Ascending aorta (tissue), 2 donors: ENCODE measurements at regions of chr16 and their contacts with region 1.

Region 1: GRCh38 chr16:11742539-11743307 is at the start of gene TXNDC11:
- DNase-seq: peak; percentile 95 to 99
- H3K4me3 ChIP-seq: peak within 1 kb of the TSS; percentile 74 to 80
- H3K27ac ChIP-seq: peak within 1 kb of the TSS; percentile 93 to 98
- H3K4me1 ChIP-seq: peaks cover 0 to 13% of the 10 kb centered on the region in 2 donors
- H3K27me3 ChIP-seq: no peaks in the 10 kb centered on the region
- CTCF ChIP-seq: no peak
- total RNA-seq, gene TXNDC11: 86.5 TPM

Region 2: GRCh38 chr16:10944249-10945064 is 798.3 kb before region 1 on chr16 and contains the start of gene CLEC16A:
- intact Hi-C with region 1: loop called (anchors 10 kb)
- DNase-seq: peak; percentile 93 to 99
- H3K4me3 ChIP-seq: peak within 1 kb of the TSS; percentile 98
- H3K27ac ChIP-seq: peak within 1 kb of the TSS; percentile 85 to 86
- H3K4me1 ChIP-seq: peaks cover 20 to 49% of the 10 kb centered on the region in 2 donors
- H3K27me3 ChIP-seq: no peaks in the 10 kb centered on the region
- CTCF ChIP-seq: no peak
- total RNA-seq, gene CLEC16A: 16.2 TPM

Region 3: DNA sequence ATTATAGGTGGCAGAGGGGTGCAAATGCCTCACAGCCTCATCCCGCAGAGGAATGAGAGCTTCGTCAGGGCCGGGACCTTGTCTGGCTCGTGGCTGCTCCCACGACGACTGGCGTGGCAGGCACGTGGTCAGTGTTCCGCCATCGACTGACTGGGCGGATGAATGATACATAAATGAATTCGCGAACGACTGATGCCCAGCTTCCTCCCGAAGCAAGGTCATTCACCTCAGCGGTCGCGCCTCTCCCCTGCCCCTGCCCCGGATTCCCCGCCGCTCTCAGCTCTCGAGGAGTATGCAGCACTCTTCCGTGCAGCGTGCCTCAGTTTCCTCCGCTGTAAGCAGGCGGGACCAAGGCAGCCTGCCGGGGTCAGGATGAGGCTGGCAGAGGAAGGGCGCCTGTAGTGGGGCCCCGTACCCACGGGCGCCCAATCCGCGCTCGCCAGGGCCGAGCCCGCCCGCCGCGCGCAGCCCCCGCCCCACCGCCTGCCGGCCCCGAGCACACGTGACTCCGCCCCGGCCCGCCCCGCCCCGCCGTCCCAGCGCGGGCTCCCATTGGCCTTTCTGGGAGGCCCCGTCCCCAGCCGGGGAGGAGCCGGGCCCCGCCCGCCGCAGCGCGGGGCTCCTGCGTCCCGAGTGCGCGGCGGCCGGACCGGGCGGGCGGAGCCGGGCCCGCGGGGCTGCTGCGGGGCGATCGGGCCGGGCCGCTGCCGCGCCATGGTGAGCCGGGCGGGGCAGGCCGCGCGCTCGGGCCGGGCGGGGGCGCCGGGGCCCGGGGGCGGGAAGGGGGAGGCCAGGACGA is 74.7 kb before region 1 on chr16 and contains the start of gene SNN:
- intact Hi-C with region 1: loop called (anchors 1 kb)
- DNase-seq: peak; percentile 52 to 93
- H3K4me3 ChIP-seq: peak within 1 kb of the TSS; percentile 95 to 98
- H3K27ac ChIP-seq: peak within 1 kb of the TSS; percentile 78 to 81
- H3K4me1 ChIP-seq: peaks cover 9 to 34% of the 10 kb centered on the region in 2 donors
- H3K27me3 ChIP-seq: no peaks in the 10 kb centered on the region
- CTCF ChIP-seq: no peak
- total RNA-seq, gene SNN: 2.1 TPM

Region 4: GRCh38 chr16:11689031-11689761 is 53.5 kb before region 1 on chr16:
- intact Hi-C with region 1: no loop called
- DNase-seq: no peak
- H3K4me3 ChIP-seq: no peak overlapping the region
- H3K27ac ChIP-seq: peak overlapping the region in 1 of 2 donors; percentile 52
- H3K4me1 ChIP-seq: peaks cover 0 to 30% of the 10 kb centered on the region in 2 donors
- H3K27me3 ChIP-seq: no peaks in the 10 kb centered on the region
- CTCF ChIP-seq: no peak

Region 5: DNA sequence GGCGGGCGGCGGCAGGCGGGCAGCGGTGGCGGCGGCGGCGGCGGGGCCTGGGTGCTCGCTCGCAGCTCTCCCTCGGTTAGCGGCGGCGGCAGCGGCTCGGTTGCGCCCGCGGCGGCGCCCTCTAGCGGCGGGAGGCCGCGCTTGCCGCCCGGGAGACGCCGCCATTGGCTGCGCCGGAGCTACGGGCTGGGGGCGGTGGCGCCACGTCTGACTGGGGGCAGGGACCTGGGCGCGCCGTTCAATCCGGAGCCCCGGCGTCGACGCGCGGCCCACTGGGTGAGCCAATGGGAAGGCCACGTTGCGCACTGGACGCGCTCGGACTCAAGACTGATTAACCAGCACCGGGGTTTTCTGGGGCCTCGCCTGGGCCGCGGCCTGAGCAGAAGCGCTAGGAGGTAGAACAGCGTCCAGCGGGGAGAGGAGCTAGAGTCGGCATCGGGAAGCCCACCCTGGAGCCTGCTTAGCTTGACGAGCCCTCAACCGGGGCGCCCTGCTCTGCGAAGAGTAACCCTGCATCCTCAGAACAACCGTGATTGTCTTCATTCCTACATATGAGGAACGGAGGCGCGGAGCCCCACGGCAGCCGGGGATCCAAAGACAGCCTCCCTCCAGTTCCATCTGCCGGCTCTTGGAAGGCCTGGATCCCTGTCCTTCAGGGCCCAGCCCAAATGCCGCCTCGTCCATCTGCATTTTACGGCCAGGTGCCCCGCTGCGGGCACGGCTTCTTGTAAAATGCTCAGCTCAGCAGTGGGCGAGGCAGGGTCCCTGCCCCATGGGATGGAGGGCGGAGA is 54.6 kb after region 1 on chr16 and contains the start of gene ZC3H7A:
- intact Hi-C with region 1: loop called (anchors 1 kb)
- DNase-seq: peak; percentile 85 to 98
- H3K4me3 ChIP-seq: peak within 1 kb of the TSS; percentile 70 to 91
- H3K27ac ChIP-seq: peak within 1 kb of the TSS; percentile 97 to 98
- H3K4me1 ChIP-seq: peaks cover 14 to 48% of the 10 kb centered on the region in 2 donors
- H3K27me3 ChIP-seq: no peaks in the 10 kb centered on the region
- CTCF ChIP-seq: peak; percentile 36 to 99 (median 53)
- total RNA-seq, gene ZC3H7A: 56.9 TPM

Region 6: GRCh38 chr16:11851294-11852091 is 108.8 kb after region 1 on chr16 and contains the start of gene RSL1D1:
- intact Hi-C with region 1: loop called (anchors 5 kb)
- DNase-seq: peak; percentile 62 to 94
- H3K4me3 ChIP-seq: peak within 1 kb of the TSS; percentile 77 to 95
- H3K27ac ChIP-seq: peak within 1 kb of the TSS; percentile 85 to 89
- H3K4me1 ChIP-seq: peaks cover 0 to 24% of the 10 kb centered on the region in 2 donors
- H3K27me3 ChIP-seq: no peaks in the 10 kb centered on the region
- CTCF ChIP-seq: no peak
- total RNA-seq, gene RSL1D1: 160 TPM

Region 7: DNA sequence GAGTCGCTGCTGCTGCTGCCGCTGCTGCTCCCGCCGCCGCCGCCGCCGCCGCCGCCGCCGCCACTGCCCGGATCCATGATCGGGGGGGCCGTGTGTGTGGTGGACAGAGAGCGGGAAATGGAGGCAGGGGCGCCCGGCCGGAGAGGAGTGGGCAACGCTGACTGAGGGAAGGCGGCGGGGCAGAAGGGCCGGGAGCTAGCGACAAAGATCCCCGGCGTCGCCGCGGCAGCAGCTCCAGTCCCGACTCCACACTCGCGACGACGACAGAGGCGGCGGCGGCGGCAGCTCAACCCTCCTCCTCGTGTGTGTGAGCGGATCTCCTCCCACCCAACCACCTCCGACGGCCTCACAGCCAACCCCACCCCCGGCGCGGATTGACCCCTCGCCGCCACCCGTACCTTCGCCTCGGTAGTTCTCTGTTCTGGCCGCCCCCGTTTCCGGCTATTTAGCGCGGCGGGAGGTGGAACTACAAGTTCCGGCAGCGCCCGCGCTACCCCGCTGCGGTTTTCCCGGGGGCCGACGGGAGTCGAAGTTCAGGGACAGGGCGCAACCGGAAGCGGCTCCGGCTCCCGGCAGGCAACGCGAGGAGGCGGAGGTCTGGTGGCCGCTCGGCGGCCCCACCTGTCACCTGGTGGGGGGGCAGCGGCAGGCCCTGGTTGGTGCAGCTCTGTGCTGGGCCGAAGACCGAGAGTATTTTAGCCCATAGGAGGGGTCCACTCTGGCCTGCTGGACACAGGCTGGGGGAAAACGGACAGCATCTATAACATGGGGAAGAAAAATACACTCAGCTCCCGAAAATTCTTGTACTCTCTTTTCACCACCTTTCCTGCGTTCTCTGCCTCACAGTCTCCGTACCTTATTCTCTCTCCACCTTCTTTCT is 173.2 kb after region 1 on chr16 and contains the start of gene GSPT1:
- intact Hi-C with region 1: loop called (anchors 1 kb)
- DNase-seq: peak; percentile 97 to 100
- H3K4me3 ChIP-seq: peak within 1 kb of the TSS; percentile 87 to 99
- H3K27ac ChIP-seq: peak within 1 kb of the TSS; percentile 93
- H3K4me1 ChIP-seq: peaks cover 0 to 23% of the 10 kb centered on the region in 2 donors
- H3K27me3 ChIP-seq: no peaks in the 10 kb centered on the region
- CTCF ChIP-seq: no peak
- total RNA-seq, gene GSPT1: 56.3 TPM

Region 8: DNA sequence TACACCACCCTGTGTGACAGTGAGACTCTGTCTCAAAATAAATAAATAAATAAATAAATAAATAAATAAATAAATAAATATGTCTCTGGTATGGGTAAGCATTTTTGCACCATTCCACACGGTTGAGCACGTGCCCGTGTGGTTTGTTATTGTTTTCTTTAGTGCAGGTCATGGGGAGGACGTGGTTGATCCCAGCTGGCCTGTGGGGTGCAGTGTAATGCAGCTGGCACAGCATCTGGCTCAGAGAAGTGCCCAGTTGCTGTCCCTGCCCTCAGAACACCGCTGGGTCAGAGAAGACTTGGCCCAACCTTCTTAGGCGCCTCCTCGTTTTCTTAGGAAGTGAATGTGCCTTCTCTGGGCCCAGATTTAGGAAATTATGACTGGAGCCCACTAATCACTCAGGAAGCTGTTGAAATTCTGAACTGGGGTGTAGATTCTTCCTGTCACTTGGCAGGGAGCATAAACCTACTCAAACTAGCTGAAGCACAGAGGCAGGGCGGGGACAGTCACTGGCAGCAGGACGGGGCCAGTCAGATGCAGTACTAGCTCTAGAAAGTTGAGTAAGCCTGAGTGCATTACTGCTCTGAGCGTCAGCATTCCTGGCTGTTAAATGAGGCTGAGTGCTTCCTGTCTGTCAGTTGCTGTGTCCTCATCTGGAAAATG is 319.8 kb after region 1 on chr16:
- intact Hi-C with region 1: loop called (anchors 5 kb)
- DNase-seq: peak; percentile 89 to 98
- H3K4me3 ChIP-seq: no peak overlapping the region
- H3K27ac ChIP-seq: peak overlapping the region; percentile 89 to 94
- H3K4me1 ChIP-seq: peaks cover 7 to 31% of the 10 kb centered on the region in 2 donors
- H3K27me3 ChIP-seq: no peaks in the 10 kb centered on the region
- CTCF ChIP-seq: no peak